ENCODE measurements at regions of chr6 and their contacts with region 1.

Region 1: GRCh38 chr6:52284460-52285176 is at the start of gene MCM3:
- DNase-seq: peak; percentile 89 to 99 (median 94)
- ATAC-seq: peak; percentile 95
- H3K4me3 ChIP-seq: peak within 1 kb of the TSS; percentile 67 to 74
- H3K4me3 Mint-ChIP-seq: peak within 1 kb of the TSS; percentile 50
- H3K27ac ChIP-seq: peak within 1 kb of the TSS; percentile 56 to 63
- H3K27ac Mint-ChIP-seq: peak within 1 kb of the TSS; percentile 63
- H3K4me1 ChIP-seq: peaks cover 36% of the 10 kb centered on the region
- H3K4me1 Mint-ChIP-seq: peaks cover 44% of the 10 kb centered on the region
- H3K27me3 ChIP-seq: no peaks in the 10 kb centered on the region
- H3K27me3 Mint-ChIP-seq: no peaks in the 10 kb centered on the region
- CTCF ChIP-seq: no peak
- total RNA-seq, gene MCM3: 6.2 to 6.8 TPM

Region 2: DNA sequence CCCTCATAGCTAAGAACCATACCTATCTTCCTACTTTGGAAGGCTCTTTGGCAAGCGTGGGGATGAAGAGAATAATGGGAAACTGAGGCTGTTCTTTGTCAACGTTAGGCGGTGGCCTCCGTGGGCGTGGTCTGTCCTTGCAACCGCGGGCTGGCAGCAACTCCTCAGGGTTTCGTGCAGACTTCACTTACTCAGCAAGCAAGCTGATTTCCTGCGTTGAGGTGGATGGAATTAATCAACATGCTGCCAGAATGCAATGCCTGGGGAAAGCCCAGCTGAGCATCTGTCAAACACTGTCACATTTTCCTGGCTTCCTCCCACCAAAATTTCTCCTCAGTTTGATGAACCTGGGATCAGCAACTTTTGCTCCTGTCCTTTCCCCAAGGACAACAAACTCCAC is 31.1 kb before region 1 on chr6:
- CTCF ChIA-PET with region 1: no interaction called
- POLR2A ChIA-PET with region 1: no interaction called
- intact Hi-C with region 1: no loop called
- DNase-seq: no peak
- ATAC-seq: no peak
- H3K4me3 ChIP-seq: no peak overlapping the region
- H3K4me3 Mint-ChIP-seq: no peak overlapping the region
- H3K27ac ChIP-seq: no peak overlapping the region
- H3K27ac Mint-ChIP-seq: no peak overlapping the region
- H3K4me1 ChIP-seq: no peaks in the 10 kb centered on the region
- H3K4me1 Mint-ChIP-seq: no peaks in the 10 kb centered on the region
- H3K27me3 ChIP-seq: peaks cover 0 to 5% of the 10 kb centered on the region in 2 experiments
- H3K27me3 Mint-ChIP-seq: peaks cover 27% of the 10 kb centered on the region
- CTCF ChIP-seq: no peak

Region 3: GRCh38 chr6:52304983-52305390 is 20.4 kb after region 1 on chr6:
- CTCF ChIA-PET with region 1: interaction called, 31 read pairs
- POLR2A ChIA-PET with region 1: interaction called, 16 read pairs
- intact Hi-C with region 1: loop called in 1 of 2 experiments (anchors 1 kb)
- DNase-seq: peak in 1 of 9 experiments; percentile 46
- ATAC-seq: peak; percentile 46
- H3K4me3 ChIP-seq: peak overlapping the region in 1 of 2 experiments; percentile 8
- H3K4me3 Mint-ChIP-seq: peak overlapping the region; percentile 58
- H3K27ac ChIP-seq: peak overlapping the region; percentile 38 to 78
- H3K27ac Mint-ChIP-seq: peak overlapping the region; percentile 88
- H3K4me1 ChIP-seq: peaks cover 71% of the 10 kb centered on the region
- H3K4me1 Mint-ChIP-seq: peaks cover 71% of the 10 kb centered on the region
- H3K27me3 ChIP-seq: no peaks in the 10 kb centered on the region
- H3K27me3 Mint-ChIP-seq: no peaks in the 10 kb centered on the region
- CTCF ChIP-seq: no peak

Region 4: DNA sequence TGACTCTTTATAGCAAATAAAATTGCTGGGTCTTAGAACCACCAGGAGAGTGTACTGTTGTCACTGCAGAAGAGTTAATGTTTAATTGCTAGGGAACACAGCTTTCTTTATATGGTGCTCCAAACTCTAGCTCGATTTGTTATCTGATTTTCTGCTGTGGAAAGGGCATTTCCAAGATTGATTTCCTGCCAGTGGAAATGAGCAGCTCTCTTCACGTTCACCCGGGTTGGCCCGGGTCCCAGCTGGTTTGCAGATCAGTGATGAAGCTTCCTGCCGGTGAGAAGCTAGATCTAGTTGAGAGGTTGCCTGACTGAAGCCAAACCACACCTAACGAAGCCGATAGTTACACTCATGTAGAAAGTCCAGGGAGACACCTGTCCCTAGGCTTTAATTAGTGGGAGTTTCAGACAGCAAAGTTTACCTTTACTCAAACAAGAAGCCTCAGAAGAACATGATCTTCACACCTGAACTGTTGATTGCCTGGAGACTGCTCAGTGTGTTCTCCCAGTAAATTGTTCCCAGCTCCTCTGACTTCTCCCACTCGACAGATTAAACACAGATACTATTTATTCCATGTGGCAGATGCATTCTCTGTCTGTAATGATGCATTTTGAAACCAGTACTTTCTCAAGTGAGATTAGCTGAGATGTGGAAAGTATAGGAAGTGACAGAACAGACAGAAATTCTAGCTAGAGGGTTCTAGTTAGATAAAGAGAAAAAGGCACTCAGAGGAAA is 105.2 kb after region 1 on chr6:
- CTCF ChIA-PET with region 1: interaction called, 68 read pairs
- POLR2A ChIA-PET with region 1: interaction called, 29 read pairs
- intact Hi-C with region 1: loop called in 1 of 2 experiments (anchors 1 kb)
- DNase-seq: peak in 8 of 9 experiments; percentile 37 to 84 (median 69)
- ATAC-seq: peak; percentile 39
- H3K4me3 ChIP-seq: peak overlapping the region; percentile 36 to 44
- H3K4me3 Mint-ChIP-seq: peak overlapping the region; percentile 83
- H3K27ac ChIP-seq: peak overlapping the region; percentile 78 to 79
- H3K27ac Mint-ChIP-seq: peak overlapping the region; percentile 98
- H3K4me1 ChIP-seq: peaks cover 71% of the 10 kb centered on the region
- H3K4me1 Mint-ChIP-seq: peaks cover 86% of the 10 kb centered on the region
- H3K27me3 ChIP-seq: no peaks in the 10 kb centered on the region
- H3K27me3 Mint-ChIP-seq: no peaks in the 10 kb centered on the region
- CTCF ChIP-seq: peak; percentile 30

Region 5: GRCh38 chr6:52577022-52577777 is 292.6 kb after region 1 on chr6 and contains the start of gene TRAM2:
- CTCF ChIA-PET with region 1: interaction called, 3 read pairs
- POLR2A ChIA-PET with region 1: interaction called, 6 read pairs
- intact Hi-C with region 1: loop called (anchors 1 kb)
- DNase-seq: peak; percentile 62 to 89 (median 77)
- ATAC-seq: peak; percentile 78
- H3K4me3 ChIP-seq: peak within 1 kb of the TSS; percentile 81 to 82
- H3K4me3 Mint-ChIP-seq: peak within 1 kb of the TSS; percentile 87
- H3K27ac ChIP-seq: peak within 1 kb of the TSS; percentile 58
- H3K27ac Mint-ChIP-seq: peak within 1 kb of the TSS; percentile 87
- H3K4me1 ChIP-seq: peaks cover 44% of the 10 kb centered on the region
- H3K4me1 Mint-ChIP-seq: peaks cover 49% of the 10 kb centered on the region
- H3K27me3 ChIP-seq: no peaks in the 10 kb centered on the region
- H3K27me3 Mint-ChIP-seq: no peaks in the 10 kb centered on the region
- CTCF ChIP-seq: no peak
- total RNA-seq, gene TRAM2: 4.6 to 4.9 TPM

Region 6: GRCh38 chr6:52664186-52664990 is 379.8 kb after region 1 on chr6:
- CTCF ChIA-PET with region 1: interaction called, 11 read pairs
- POLR2A ChIA-PET with region 1: no interaction called
- intact Hi-C with region 1: loop called (anchors 1 to 2 kb)
- DNase-seq: peak; percentile 5 to 70 (median 45)
- ATAC-seq: peak; percentile 66
- H3K4me3 ChIP-seq: peak overlapping the region; percentile 61 to 82
- H3K4me3 Mint-ChIP-seq: no peak overlapping the region
- H3K27ac ChIP-seq: no peak overlapping the region
- H3K27ac Mint-ChIP-seq: no peak overlapping the region
- H3K4me1 ChIP-seq: peaks cover 14% of the 10 kb centered on the region
- H3K4me1 Mint-ChIP-seq: no peaks in the 10 kb centered on the region
- H3K27me3 ChIP-seq: peaks cover 0 to 10% of the 10 kb centered on the region in 2 experiments
- H3K27me3 Mint-ChIP-seq: no peaks in the 10 kb centered on the region
- CTCF ChIP-seq: no peak

Region 7: DNA sequence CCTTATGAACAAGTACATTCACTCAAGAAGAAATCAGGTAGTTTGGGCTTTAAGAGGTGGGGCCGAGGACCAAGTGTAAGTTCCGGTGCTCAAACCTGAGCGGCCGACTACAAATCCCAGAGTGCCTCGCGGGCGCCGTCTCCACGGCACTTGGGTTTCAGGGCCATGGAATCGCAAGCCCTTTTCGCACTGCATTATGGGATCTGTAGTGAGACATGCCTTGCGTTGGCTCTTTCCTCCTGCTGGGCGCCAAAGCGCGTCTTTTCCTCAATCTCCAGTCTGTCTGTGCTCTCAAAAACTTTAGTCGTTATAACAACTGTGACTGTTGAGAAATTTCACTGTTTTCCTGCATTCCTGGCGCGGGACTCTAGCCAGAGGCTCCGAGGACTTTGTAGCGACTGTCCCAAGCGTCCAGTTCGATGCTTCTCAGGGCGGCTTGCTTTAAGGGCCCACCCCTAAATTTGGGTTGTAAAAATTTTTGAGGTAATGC is 780.2 kb after region 1 on chr6:
- CTCF ChIA-PET with region 1: no interaction called
- POLR2A ChIA-PET with region 1: no interaction called
- intact Hi-C with region 1: loop called (anchors 1 to 2 kb)
- DNase-seq: peak; percentile 90 to 98 (median 96)
- ATAC-seq: peak; percentile 83
- H3K4me3 ChIP-seq: peak overlapping the region; percentile 79 to 83
- H3K4me3 Mint-ChIP-seq: peak overlapping the region; percentile 100
- H3K27ac ChIP-seq: peak overlapping the region; percentile 55 to 81
- H3K27ac Mint-ChIP-seq: peak overlapping the region; percentile 98
- H3K4me1 ChIP-seq: peaks cover 39% of the 10 kb centered on the region
- H3K4me1 Mint-ChIP-seq: peaks cover 60% of the 10 kb centered on the region
- H3K27me3 ChIP-seq: no peaks in the 10 kb centered on the region
- H3K27me3 Mint-ChIP-seq: no peaks in the 10 kb centered on the region
- CTCF ChIP-seq: no peak

Measured in CD8-positive, alpha-beta T cell (primary cell).